A549 (cell line): ENCODE measurements at regions of chr6 and their contacts with region 1.

Region 1: DNA sequence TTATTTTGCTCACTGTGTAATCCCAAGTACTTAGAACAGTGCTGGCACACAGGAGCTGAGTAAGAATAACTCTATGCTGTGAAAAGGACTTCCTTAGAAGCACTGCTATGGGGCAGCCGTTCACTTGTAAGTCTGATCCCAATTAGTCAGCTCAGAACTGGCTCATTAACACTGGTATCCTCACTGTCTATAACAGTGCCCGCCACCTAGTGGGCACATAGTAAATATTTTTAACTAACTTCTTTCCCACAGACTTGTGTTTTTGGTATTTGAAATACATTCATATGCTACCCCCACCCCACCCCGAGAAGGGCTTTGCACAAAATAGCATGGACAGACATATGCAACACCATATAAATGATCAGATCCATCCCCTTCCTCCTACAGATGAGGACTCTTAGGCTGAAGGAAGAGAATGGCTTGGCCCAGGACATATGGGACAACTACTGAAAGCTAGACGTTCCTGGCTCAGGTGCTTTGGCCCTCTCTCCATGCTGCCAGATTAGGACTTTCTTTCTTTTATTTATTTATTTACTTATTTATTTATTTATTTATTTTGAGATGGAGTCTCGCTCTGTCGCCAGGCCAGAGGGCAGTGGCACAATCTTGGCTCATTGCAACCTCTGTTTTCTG is 47.1 kb downstream of the DST start:
- DNase-seq: peak; percentile 5 to 8
- ATAC-seq: peak; percentile 54 to 69; a peak in 5 of 6 replicates
- H3K4me3 ChIP-seq: no peak overlapping the region
- H3K27ac ChIP-seq: no peak overlapping the region
- H3K4me1 ChIP-seq: no peaks in the 10 kb centered on the region
- CTCF ChIP-seq: peak; percentile 56
- EP300 ChIP-seq: no peak
- POLR2A ChIP-seq: no peak
- RAD21 ChIP-seq: 0 out of 5 replicates have a peak, but pooled peaks of 1 of the 2 experiments have one; percentile 19

Region 2: DNA sequence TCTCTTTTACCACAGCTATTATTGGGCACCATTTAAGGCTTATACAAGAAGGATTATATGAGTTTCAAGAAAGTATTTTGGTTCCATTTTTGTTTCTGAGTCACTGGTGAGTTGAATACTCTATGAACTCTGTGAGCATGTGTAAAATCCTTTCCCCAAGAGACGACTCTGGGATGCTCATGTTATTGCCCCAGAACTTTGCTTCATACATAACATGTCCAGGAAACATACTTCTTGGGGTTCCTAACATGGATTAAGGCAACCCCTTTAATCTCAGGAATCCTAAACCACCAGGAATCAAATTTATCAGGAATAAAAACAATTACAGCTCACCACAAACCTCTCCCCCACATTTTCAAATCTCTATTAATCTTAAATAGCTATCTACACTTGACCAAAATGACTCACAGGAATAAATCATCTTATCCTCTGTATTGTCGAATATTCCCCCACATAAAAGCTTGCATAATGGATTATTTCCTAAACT is 230.7 kb before region 1 on chr6:
- CTCF ChIA-PET with region 1: interaction called, 25 read pairs
- POLR2A ChIA-PET with region 1: no interaction called
- DNase-seq: no peak
- ATAC-seq: no peak
- H3K4me3 ChIP-seq: no peak overlapping the region
- H3K27ac ChIP-seq: no peak overlapping the region
- H3K4me1 ChIP-seq: peaks cover 3% of the 10 kb centered on the region; the same call in 2 of the 3 replicates
- CTCF ChIP-seq: no peak
- EP300 ChIP-seq: no peak
- POLR2A ChIP-seq: no peak
- RAD21 ChIP-seq: no peak

Region 3: DNA sequence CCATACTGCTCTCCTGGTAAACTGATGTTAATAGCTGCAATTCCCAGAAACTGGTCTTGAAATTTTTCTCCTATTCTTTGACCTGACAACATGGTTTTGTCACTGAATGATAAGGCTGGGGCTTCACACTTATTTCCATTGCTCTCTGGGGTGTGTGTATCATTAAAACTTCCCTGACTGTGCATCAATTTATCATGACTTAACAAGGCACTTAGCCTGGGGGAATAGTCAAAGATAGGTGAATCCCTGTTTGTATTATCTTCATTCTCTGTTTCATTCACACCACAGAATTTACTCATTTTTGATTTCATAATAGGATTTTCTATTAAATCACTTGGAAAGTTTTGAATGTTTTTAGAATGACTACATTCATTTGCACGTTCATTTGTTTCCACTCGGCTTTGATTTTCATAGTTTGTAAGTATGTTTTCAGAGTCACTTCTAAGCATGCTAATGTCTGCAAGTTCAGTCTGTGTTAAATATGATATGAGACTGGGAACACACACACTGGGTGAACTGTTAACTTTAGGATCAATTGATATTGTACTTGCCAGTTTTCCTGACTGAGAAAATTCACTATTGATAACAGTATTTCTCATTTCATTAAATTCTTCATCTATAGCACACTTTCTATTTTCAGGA is 11.6 kb after region 1 on chr6:
- CTCF ChIA-PET with region 1: interaction called, 16 read pairs
- POLR2A ChIA-PET with region 1: no interaction called
- DNase-seq: no peak
- ATAC-seq: no peak
- H3K4me3 ChIP-seq: no peak overlapping the region
- H3K27ac ChIP-seq: no peak overlapping the region
- H3K4me1 ChIP-seq: no peaks in the 10 kb centered on the region
- CTCF ChIP-seq: no peak
- EP300 ChIP-seq: no peak
- POLR2A ChIP-seq: no peak
- RAD21 ChIP-seq: no peak